CD4-positive, alpha-beta memory T cell (primary cell): ENCODE measurements at regions of chr13 and their contacts with region 1.

Region 1: GRCh38 chr13:99269627-99270241 is 11.6 kb upstream of the GPR18 start:
- DNase-seq: peak; percentile 57 to 71 (median 63)
- H3K4me3 ChIP-seq: no peak overlapping the region
- H3K4me3 Mint-ChIP-seq: peak overlapping the region in 2 of 8 donors; percentile 53 to 67
- H3K27ac ChIP-seq: peak overlapping the region; percentile 42
- H3K27ac Mint-ChIP-seq: peak overlapping the region; percentile 23 to 98 (median 92)
- H3K4me1 ChIP-seq: peaks cover 59% of the 10 kb centered on the region
- H3K4me1 Mint-ChIP-seq: peaks cover 43 to 72% (median 58%) of the 10 kb centered on the region in 4 donors
- H3K27me3 ChIP-seq: no peaks in the 10 kb centered on the region
- H3K27me3 Mint-ChIP-seq: no peaks in the 10 kb centered on the region

Region 2: GRCh38 chr13:98910501-98910951 is 359.2 kb before region 1 on chr13:
- CTCF ChIA-PET with region 1: no interaction called
- POLR2A ChIA-PET with region 1: no interaction called
- intact Hi-C with region 1: loop called (anchors 10 kb)
- DNase-seq: peak; percentile 30 to 72 (median 34)
- H3K4me3 ChIP-seq: no peak overlapping the region
- H3K4me3 Mint-ChIP-seq: peak overlapping the region in 7 of 8 donors; percentile 35 to 81 (median 48)
- H3K27ac ChIP-seq: peak overlapping the region; percentile 17
- H3K27ac Mint-ChIP-seq: peak overlapping the region; percentile 62 to 97 (median 92)
- H3K4me1 ChIP-seq: peaks cover 15% of the 10 kb centered on the region
- H3K4me1 Mint-ChIP-seq: peaks cover 17 to 44% (median 31%) of the 10 kb centered on the region in 4 donors
- H3K27me3 ChIP-seq: no peaks in the 10 kb centered on the region
- H3K27me3 Mint-ChIP-seq: no peaks in the 10 kb centered on the region

Region 3: GRCh38 chr13:99228737-99229691 is 40.7 kb before region 1 on chr13:
- CTCF ChIA-PET with region 1: interaction called, 13 read pairs
- POLR2A ChIA-PET with region 1: interaction called, 3 read pairs
- intact Hi-C with region 1: no loop called
- DNase-seq: no peak
- H3K4me3 ChIP-seq: no peak overlapping the region
- H3K4me3 Mint-ChIP-seq: peak overlapping the region; percentile 33 to 91 (median 78)
- H3K27ac ChIP-seq: peak overlapping the region; percentile 52
- H3K27ac Mint-ChIP-seq: peak overlapping the region; percentile 63 to 92 (median 88)
- H3K4me1 ChIP-seq: peaks cover 86% of the 10 kb centered on the region
- H3K4me1 Mint-ChIP-seq: peaks cover 56 to 75% (median 65%) of the 10 kb centered on the region in 4 donors
- H3K27me3 ChIP-seq: no peaks in the 10 kb centered on the region
- H3K27me3 Mint-ChIP-seq: no peaks in the 10 kb centered on the region

Region 4: DNA sequence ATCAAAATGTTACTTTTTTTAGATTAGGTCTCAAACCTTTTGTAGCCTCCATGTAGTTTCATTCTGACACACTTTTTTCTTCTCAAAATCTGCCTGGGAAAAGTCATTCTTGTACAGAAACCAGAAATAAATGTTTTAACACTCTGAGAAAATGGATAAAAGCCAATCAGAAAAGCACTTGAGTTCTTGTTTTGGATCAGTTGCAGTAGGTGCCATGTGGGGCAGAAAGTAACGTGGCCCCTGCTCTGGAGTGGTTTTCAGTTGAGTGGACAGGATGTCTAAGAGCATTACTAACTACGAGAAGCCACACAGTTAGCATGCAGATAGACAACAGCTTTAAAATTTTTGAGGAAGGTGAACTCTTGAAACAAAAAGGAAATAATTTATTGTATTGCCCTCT is 18.4 kb after region 1 on chr13:
- CTCF ChIA-PET with region 1: interaction called, 139 read pairs
- POLR2A ChIA-PET with region 1: interaction called, 74 read pairs
- intact Hi-C with region 1: no loop called
- DNase-seq: no peak
- H3K4me3 ChIP-seq: no peak overlapping the region
- H3K4me3 Mint-ChIP-seq: peak overlapping the region; percentile 33 to 84 (median 60)
- H3K27ac ChIP-seq: peak overlapping the region; percentile 18
- H3K27ac Mint-ChIP-seq: peak overlapping the region; percentile 88 to 95 (median 89)
- H3K4me1 ChIP-seq: peaks cover 95% of the 10 kb centered on the region
- H3K4me1 Mint-ChIP-seq: peaks cover 65 to 100% (median 81%) of the 10 kb centered on the region in 4 donors
- H3K27me3 ChIP-seq: no peaks in the 10 kb centered on the region
- H3K27me3 Mint-ChIP-seq: no peaks in the 10 kb centered on the region

Region 5: DNA sequence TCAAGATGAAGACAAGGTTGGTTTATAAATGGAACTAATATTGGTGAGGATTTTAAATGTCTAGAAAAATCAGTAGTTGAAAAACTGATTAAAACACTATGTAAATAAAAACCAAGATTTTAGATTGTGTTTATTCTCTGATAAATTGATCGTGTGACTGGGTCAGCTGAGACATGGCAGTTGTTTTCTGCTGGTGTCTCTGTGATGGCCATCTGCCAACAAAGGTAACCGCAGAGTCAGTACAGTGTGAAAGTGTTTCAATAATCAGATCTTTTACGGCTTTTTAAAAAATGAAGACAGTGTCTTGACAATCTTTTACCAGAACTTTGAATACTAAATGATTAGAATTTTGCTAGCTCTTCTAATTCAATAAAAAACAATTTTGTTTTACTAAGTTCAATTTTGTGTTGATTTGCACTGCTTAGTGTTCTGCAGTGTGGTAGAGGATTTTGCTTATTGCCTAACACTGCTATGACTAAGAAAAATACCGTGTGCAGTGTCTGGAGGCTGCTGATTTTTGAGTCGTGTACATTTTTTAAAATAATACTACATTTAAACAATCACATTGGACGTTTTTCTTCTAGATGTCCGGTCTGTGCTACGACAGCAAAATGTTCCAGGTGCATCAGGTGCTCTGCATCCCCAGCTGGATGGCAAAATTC is 70.1 kb after region 1 on chr13:
- CTCF ChIA-PET with region 1: interaction called, 10 read pairs
- POLR2A ChIA-PET with region 1: interaction called, 16 read pairs
- intact Hi-C with region 1: no loop called
- DNase-seq: peak; percentile 71 to 86 (median 76)
- H3K4me3 ChIP-seq: peak overlapping the region; percentile 4 to 37
- H3K4me3 Mint-ChIP-seq: peak overlapping the region; percentile 68 to 91 (median 85)
- H3K27ac ChIP-seq: peak overlapping the region; percentile 47
- H3K27ac Mint-ChIP-seq: peak overlapping the region; percentile 76 to 94 (median 91)
- H3K4me1 ChIP-seq: peaks cover 86% of the 10 kb centered on the region
- H3K4me1 Mint-ChIP-seq: peaks cover 71 to 97% (median 83%) of the 10 kb centered on the region in 4 donors
- H3K27me3 ChIP-seq: no peaks in the 10 kb centered on the region
- H3K27me3 Mint-ChIP-seq: no peaks in the 10 kb centered on the region

Region 6: DNA sequence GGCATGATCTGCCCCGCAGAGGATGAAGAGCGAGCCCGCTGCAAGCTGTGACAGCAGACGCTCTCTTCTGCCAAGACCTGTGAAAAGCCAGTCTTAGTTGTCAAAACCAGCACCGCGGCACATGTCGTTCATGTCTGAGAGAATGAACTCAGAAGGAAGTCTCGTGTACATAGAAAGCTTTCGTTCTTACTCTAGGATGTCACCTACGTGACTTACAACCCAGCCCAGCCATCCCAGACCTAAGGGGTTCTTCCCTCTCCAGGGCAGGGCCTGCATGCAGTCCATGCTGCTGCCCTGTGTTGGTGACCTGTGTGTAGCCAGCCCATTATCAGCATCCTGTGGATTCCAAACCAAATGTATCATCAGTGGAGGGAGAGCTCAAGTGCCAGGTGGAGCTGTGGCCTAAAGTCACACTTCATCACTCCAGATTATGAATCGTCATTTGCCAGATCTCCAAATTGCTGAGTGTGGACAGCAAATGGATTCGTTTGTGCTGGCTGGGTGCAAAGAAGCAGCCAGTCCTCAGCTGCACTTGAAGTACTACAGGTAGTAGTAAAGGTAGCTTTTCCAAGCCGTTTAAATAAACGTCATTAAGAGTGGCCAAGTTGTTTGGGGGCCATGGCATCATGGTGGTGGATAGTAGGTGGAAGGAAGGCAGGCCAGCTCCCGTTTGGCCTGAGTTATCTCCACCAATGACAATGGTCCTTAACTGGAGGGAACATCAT is 111.3 kb after region 1 on chr13:
- CTCF ChIA-PET with region 1: interaction called, 315 read pairs
- POLR2A ChIA-PET with region 1: interaction called, 20 read pairs
- intact Hi-C with region 1: no loop called
- DNase-seq: peak in 4 of 5 donors; percentile 52 to 67 (median 61)
- H3K4me3 ChIP-seq: peak overlapping the region in 1 of 2 donors; percentile 0
- H3K4me3 Mint-ChIP-seq: peak overlapping the region in 7 of 8 donors; percentile 61 to 89 (median 73)
- H3K27ac ChIP-seq: peak overlapping the region; percentile 51
- H3K27ac Mint-ChIP-seq: peak overlapping the region; percentile 92 to 99 (median 96)
- H3K4me1 ChIP-seq: peaks cover 87% of the 10 kb centered on the region
- H3K4me1 Mint-ChIP-seq: peaks cover 70 to 97% (median 87%) of the 10 kb centered on the region in 4 donors
- H3K27me3 ChIP-seq: no peaks in the 10 kb centered on the region
- H3K27me3 Mint-ChIP-seq: no peaks in the 10 kb centered on the region

Region 7: DNA sequence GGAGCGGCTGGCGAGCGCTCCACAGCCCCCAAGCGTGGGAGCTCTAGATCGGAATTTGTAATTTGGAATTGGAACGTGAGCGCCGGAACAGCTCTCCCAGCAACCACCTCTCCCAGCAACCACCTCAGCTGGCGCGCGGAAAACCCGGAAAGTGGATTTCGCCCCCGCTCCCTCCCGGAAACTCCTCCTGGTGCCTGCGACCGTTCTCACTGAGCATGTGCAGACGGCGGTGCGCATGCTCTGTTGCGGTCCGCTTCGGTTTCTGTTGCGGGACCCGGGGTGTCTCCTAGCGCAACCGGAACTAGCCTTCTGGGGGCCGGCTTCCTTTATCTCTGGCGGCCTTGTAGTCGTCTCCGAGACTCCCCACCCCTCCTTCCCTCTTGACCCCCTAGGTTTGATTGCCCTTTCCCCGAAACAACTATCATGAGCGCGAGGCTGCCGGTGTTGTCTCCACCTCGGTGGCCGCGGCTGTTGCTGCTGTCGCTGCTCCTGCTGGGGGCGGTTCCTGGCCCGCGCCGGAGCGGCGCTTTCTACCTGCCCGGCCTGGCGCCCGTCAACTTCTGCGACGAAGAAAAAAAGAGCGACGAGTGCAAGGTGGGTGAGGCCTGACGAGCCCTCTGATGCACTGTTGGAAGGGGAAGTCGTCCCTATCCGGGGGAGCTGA is 231.6 kb after region 1 on chr13 and contains the start of gene TM9SF2:
- CTCF ChIA-PET with region 1: interaction called, 23 read pairs
- POLR2A ChIA-PET with region 1: interaction called, 3 read pairs
- intact Hi-C with region 1: loop called (anchors 5 kb)
- DNase-seq: peak; percentile 96 to 98 (median 97)
- H3K4me3 ChIP-seq: peak within 1 kb of the TSS; percentile 57 to 72
- H3K4me3 Mint-ChIP-seq: peak within 1 kb of the TSS; percentile 89 to 99 (median 98)
- H3K27ac ChIP-seq: peak within 1 kb of the TSS; percentile 86
- H3K27ac Mint-ChIP-seq: peak within 1 kb of the TSS; percentile 98 to 99 (median 98)
- H3K4me1 ChIP-seq: peaks cover 86% of the 10 kb centered on the region
- H3K4me1 Mint-ChIP-seq: peaks cover 49 to 94% (median 71%) of the 10 kb centered on the region in 4 donors
- H3K27me3 ChIP-seq: no peaks in the 10 kb centered on the region
- H3K27me3 Mint-ChIP-seq: no peaks in the 10 kb centered on the region
- total RNA-seq, gene TM9SF2: 60.0 to 64.2 TPM